ENCODE measurements at regions of chr11 and their contacts with region 1.

Region 1: DNA sequence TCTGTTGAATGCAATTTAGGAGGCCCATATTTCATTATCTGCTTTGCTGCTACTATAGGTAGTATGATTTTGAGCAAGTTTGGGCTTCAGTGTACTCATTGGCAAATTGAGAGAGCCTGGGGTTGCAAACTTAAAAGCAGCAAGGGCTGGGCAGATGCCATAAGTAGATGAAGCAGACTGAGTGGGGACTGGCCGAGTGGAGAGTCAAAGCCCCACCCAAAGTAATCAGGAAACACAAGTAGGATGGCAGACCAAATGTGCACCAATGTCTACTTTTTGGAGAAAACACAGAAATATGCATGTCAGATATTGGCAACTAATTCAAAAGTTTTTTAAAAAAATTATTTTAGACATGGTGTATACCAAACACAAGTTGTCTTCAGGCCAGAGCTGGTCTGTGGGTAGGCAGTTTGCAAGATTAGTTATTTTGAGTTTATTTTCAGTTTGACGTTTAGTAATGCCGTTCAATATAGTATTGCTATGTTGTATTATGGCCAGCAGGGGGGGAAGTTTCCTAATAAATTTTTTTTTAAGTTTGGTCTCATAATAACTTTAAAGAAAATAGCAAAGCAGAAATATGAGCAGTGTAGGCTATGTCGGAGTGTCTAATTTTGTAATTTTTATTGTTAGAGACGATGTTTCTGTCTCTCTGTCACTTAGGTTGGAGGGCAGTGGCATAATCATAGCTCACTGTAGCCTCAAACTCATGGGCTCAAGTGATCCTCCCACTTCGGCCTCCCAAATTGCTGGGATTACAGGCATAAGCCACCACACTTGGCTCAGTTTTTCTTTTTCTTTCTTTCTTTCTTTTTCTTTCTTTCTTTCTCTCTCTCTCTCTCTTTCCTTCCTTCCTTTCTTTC is 105.1 kb downstream of the HIPK3 start:
- DNase-seq: no peak
- H3K4me3 ChIP-seq: no peak overlapping the region
- H3K27ac ChIP-seq: no peak overlapping the region
- H3K27me3 ChIP-seq: no peaks in the 10 kb centered on the region
- CTCF ChIP-seq: peak; percentile 64 to 97 (median 80)

Region 2: GRCh38 chr11:32411942-32412615 is 950.2 kb before region 1 on chr11:
- intact Hi-C with region 1: no loop called
- DNase-seq: no peak
- H3K4me3 ChIP-seq: no peak overlapping the region
- H3K27ac ChIP-seq: no peak overlapping the region
- H3K27me3 ChIP-seq: peaks cover 0 to 40% (median 4%) of the 10 kb centered on the region in 45 donors
- CTCF ChIP-seq: no peak

Region 3: DNA sequence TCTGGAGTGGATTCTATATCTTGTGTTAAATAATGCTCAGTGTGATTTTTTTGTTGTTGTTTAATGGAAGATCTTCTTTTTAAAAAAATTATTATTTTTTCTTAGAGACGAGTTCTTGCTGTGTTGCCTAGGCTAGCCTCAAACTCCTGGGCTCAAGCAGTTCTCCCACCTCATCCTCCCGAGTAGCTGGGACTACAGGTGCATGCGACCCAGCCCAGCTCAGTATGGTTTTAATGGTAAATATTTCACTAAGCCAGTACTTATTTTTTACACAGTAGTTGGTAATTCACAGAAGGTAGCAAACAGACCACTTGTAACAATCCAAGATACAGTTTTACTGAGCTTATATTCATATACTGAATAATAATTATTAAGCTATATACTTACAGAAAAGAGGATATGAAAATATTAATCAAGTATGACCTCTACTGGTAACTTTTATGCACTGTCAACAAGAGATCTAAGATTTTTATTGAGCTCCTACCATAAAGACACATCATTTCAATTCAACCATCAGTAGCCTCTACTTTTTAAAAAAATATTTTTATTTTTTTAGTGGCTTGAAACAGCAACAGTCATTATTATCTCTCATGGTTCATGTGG is 380.1 kb after region 1 on chr11:
- intact Hi-C with region 1: loop called in 1 of 2 experiments (anchors 5 kb)
- DNase-seq: no peak
- H3K4me3 ChIP-seq: no peak overlapping the region
- H3K27ac ChIP-seq: peak overlapping the region in 3 of 59 donors; percentile 16 to 34 (median 16)
- H3K27me3 ChIP-seq: no peaks in the 10 kb centered on the region
- CTCF ChIP-seq: peak; percentile 31 to 81 (median 64)

Measured in dorsolateral prefrontal cortex (tissue), 120 donors.